ENCODE measurements at regions of chr5 and their contacts with region 1.

Region 1: GRCh38 chr5:157312492-157312891 is 46.6 kb downstream of the CYFIP2 start:
- DNase-seq: peak; percentile 42 to 81 (median 64)
- H3K4me3 ChIP-seq: no peak overlapping the region
- H3K27ac ChIP-seq: no peak overlapping the region
- H3K4me1 ChIP-seq: no peaks in the 10 kb centered on the region
- H3K27me3 ChIP-seq: no peaks in the 10 kb centered on the region
- CTCF ChIP-seq: peak; percentile 46 to 80 (median 69)
- POLR2A ChIP-seq: no peak

Region 2: GRCh38 chr5:157142317-157143126 is 170.0 kb before region 1 on chr5 and contains the start of gene MED7:
- intact Hi-C with region 1: no loop called
- DNase-seq: peak; percentile 95 to 98 (median 97)
- H3K4me3 ChIP-seq: peak within 1 kb of the TSS; percentile 57 to 91 (median 70)
- H3K27ac ChIP-seq: peak within 1 kb of the TSS; percentile 81 to 97 (median 93)
- H3K4me1 ChIP-seq: peaks cover 7 to 11% of the 10 kb centered on the region in 2 donors
- H3K27me3 ChIP-seq: no peaks in the 10 kb centered on the region
- CTCF ChIP-seq: no peak
- POLR2A ChIP-seq: peak; percentile 78 to 94
- total RNA-seq, gene MED7: 9.5 to 45.3 (median 17.2) TPM

Region 3: GRCh38 chr5:157159209-157159751 is 153.2 kb before region 1 on chr5:
- intact Hi-C with region 1: loop called in 1 of 2 experiments (anchors 10 kb)
- DNase-seq: no peak
- H3K4me3 ChIP-seq: no peak overlapping the region
- H3K27ac ChIP-seq: no peak overlapping the region
- H3K4me1 ChIP-seq: no peaks in the 10 kb centered on the region
- H3K27me3 ChIP-seq: peaks cover 3% of the 10 kb centered on the region
- CTCF ChIP-seq: no peak
- POLR2A ChIP-seq: no peak

Region 4: GRCh38 chr5:157259699-157260098 is 52.8 kb before region 1 on chr5:
- intact Hi-C with region 1: loop called (anchors 5 kb)
- DNase-seq: no peak
- H3K4me3 ChIP-seq: no peak overlapping the region
- H3K27ac ChIP-seq: no peak overlapping the region
- H3K4me1 ChIP-seq: no peaks in the 10 kb centered on the region
- H3K27me3 ChIP-seq: no peaks in the 10 kb centered on the region
- CTCF ChIP-seq: no peak
- POLR2A ChIP-seq: no peak